Naive thymus-derived CD4-positive, alpha-beta T cell (primary cell): ENCODE measurements at regions of chr3 and their contacts with region 1.

Region 1: GRCh38 chr3:9731206-9732079 is at the start of gene BRPF1:
- DNase-seq: peak; percentile 91 to 99 (median 98)
- ATAC-seq: peak; percentile 96
- H3K4me3 ChIP-seq: peak within 1 kb of the TSS; percentile 85
- H3K4me3 Mint-ChIP-seq: peak within 1 kb of the TSS; percentile 91 to 98 (median 93)
- H3K27ac ChIP-seq: peak within 1 kb of the TSS; percentile 88
- H3K27ac Mint-ChIP-seq: peak within 1 kb of the TSS; percentile 86 to 97 (median 95)
- H3K4me1 ChIP-seq: peaks cover 22 to 32% of the 10 kb centered on the region in 2 donors
- H3K4me1 Mint-ChIP-seq: peaks cover 49 to 77% (median 72%) of the 10 kb centered on the region in 7 donors
- H3K27me3 ChIP-seq: no peaks in the 10 kb centered on the region
- H3K27me3 Mint-ChIP-seq: no peaks in the 10 kb centered on the region
- total RNA-seq, gene BRPF1: 32.0 to 42.4 (median 39.5) TPM

Region 2: DNA sequence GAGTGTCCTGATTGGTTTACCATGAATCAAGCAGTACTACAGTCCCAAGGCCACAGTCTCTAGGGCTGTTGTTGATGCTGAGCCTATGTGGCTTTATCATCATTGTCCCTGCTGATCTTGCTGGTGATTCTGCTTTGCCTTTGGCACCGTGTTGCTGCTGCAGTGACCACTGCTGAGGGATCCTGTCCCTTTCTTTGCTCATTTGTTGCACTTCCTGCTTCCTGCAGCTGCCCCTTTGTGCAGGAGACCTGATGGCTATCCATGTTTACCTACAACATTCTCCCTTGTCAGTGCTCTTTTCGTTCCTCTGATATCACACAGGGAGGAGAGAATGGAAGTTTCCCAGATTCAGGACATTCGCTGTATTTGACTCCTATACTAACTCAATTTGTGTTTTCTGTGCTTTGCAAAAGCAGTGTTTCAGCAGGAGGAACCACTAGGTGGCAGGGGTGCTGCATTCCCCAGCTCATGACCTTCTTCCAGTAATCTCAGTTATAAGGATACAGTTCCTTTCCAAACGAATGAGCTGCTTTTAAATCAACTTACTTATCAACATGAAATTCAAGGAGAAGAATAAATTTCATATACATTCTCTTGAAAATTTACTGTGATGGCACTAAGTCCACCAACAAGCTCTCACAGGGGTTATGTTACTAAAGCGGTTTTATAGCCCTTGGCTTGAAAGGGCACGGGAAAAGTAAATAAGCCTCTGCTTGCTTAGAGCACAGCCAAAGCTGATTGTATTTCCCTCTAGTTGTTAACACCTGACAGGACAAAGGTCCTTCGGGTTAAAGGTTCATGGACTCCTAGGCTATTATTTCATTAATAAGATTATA is 378.3 kb before region 1 on chr3:
- CTCF ChIA-PET with region 1: interaction called, 3 read pairs
- POLR2A ChIA-PET with region 1: no interaction called
- intact Hi-C with region 1: loop called (anchors 1 kb)
- DNase-seq: peak; percentile 21 to 57 (median 51)
- ATAC-seq: peak; percentile 85
- H3K4me3 ChIP-seq: no peak overlapping the region
- H3K4me3 Mint-ChIP-seq: no peak overlapping the region
- H3K27ac ChIP-seq: no peak overlapping the region
- H3K27ac Mint-ChIP-seq: peak overlapping the region in 2 of 9 donors; percentile 13 to 17
- H3K4me1 ChIP-seq: no peaks in the 10 kb centered on the region
- H3K4me1 Mint-ChIP-seq: peaks cover 4 to 13% (median 5%) of the 10 kb centered on the region in 7 donors
- H3K27me3 ChIP-seq: no peaks in the 10 kb centered on the region
- H3K27me3 Mint-ChIP-seq: peaks cover 0 to under 1% (median 0%) of the 10 kb centered on the region in 5 donors

Region 3: DNA sequence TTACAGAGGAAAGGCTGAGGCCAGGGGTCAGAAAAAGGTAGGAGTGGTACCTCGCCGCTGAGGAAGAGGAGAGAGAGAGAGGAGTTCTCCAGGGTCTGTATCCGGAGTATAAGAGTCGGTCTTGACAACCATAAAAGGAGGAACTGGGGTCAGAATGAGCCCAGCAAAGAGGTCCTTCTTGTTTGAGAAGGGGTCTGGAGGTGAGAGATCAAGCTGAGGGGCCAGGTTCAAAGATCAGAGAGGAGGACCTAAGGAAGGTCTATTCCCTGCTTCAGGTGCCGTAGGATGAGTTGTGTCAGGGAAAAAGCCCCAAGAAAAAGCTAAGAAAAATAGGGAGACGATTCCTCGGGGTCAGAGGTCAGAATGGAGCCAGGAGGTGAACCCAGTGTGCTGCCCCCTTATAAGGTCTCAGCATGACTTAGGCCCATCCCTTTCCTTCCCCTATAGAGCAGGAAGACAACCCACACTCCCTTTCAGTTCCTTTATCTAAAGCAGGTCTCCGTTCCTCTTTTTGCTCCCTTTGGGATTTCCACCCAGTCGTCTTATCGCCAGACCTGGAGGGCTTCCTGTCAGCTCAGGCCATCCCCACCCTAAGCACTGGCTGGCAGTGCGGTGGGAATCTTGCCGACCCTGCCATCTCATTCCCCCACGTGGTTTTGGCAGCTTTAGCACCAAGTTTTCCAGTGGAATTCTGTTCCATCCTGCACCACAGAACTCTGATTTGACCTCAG is 81.5 kb before region 1 on chr3:
- CTCF ChIA-PET with region 1: interaction called, 4 read pairs
- POLR2A ChIA-PET with region 1: interaction called, 15 read pairs
- intact Hi-C with region 1: loop called (anchors 1 kb)
- DNase-seq: peak in 2 of 9 donors; percentile 4 to 5
- ATAC-seq: peak; percentile 15
- H3K4me3 ChIP-seq: peak overlapping the region; percentile 97
- H3K4me3 Mint-ChIP-seq: peak overlapping the region; percentile 86 to 98 (median 95)
- H3K27ac ChIP-seq: peak overlapping the region; percentile 85
- H3K27ac Mint-ChIP-seq: peak overlapping the region; percentile 91 to 98 (median 97)
- H3K4me1 ChIP-seq: peaks cover 15 to 19% of the 10 kb centered on the region in 2 donors
- H3K4me1 Mint-ChIP-seq: peaks cover 19 to 51% (median 37%) of the 10 kb centered on the region in 7 donors
- H3K27me3 ChIP-seq: no peaks in the 10 kb centered on the region
- H3K27me3 Mint-ChIP-seq: peaks cover 0 to 3% (median 0%) of the 10 kb centered on the region in 5 donors

Region 4: DNA sequence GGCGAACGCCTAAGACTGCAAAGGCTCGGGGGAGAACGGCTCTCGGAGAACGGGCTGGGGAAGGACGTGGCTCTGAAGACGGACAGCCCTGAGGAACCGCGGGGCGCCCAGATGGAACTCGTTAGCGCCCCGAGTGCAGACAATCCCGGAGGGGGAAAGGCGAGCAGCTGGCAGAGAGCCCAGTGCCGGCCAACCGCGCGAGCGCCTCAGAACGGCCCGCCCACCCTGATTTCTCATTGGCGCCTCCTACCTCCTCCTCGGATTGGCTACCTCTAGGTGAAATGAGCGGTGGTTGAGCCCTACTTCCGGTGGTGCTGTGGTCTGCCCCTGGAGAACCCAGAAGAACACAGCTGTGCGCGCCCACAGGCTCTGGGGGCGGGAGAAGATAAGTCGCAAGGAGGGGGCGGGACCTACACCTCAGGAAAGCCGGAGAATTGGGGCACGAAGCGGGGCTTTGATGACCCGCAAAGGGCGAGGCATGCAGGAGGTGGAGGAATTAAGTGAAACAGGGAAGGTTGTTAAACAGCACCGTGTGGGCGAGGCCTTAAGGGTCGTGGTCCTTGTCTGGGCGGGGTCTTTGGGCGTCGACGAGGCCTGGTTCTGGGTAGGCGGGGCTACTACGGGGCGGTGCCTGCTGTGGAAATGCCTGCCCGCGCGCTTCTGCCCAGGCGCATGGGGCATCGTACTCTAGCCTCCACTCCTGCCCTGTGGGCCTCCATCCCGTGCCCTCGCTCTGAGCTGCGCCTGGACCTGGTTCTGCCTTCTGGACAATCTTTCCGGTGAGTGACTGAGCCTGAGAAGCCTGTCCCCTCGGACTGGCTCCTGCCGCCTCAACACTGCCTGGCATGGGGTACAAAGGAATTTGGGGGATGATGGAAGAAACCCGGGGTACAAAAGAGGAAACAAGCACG is 18.5 kb after region 1 on chr3 and contains the start of gene OGG1:
- CTCF ChIA-PET with region 1: interaction called, 7 read pairs
- POLR2A ChIA-PET with region 1: interaction called, 33 read pairs
- intact Hi-C with region 1: loop called (anchors 1 kb)
- DNase-seq: peak; percentile 77 to 95 (median 94)
- ATAC-seq: peak; percentile 97
- H3K4me3 ChIP-seq: peak within 1 kb of the TSS; percentile 84
- H3K4me3 Mint-ChIP-seq: peak within 1 kb of the TSS; percentile 93 to 98 (median 96)
- H3K27ac ChIP-seq: peak within 1 kb of the TSS; percentile 73
- H3K27ac Mint-ChIP-seq: peak within 1 kb of the TSS; percentile 86 to 96 (median 93)
- H3K4me1 ChIP-seq: peaks cover 13 to 22% of the 10 kb centered on the region in 2 donors
- H3K4me1 Mint-ChIP-seq: peaks cover 30 to 58% (median 47%) of the 10 kb centered on the region in 7 donors
- H3K27me3 ChIP-seq: no peaks in the 10 kb centered on the region
- H3K27me3 Mint-ChIP-seq: no peaks in the 10 kb centered on the region
- total RNA-seq, gene OGG1: 18.8 to 42.9 (median 31.6) TPM

Region 5: DNA sequence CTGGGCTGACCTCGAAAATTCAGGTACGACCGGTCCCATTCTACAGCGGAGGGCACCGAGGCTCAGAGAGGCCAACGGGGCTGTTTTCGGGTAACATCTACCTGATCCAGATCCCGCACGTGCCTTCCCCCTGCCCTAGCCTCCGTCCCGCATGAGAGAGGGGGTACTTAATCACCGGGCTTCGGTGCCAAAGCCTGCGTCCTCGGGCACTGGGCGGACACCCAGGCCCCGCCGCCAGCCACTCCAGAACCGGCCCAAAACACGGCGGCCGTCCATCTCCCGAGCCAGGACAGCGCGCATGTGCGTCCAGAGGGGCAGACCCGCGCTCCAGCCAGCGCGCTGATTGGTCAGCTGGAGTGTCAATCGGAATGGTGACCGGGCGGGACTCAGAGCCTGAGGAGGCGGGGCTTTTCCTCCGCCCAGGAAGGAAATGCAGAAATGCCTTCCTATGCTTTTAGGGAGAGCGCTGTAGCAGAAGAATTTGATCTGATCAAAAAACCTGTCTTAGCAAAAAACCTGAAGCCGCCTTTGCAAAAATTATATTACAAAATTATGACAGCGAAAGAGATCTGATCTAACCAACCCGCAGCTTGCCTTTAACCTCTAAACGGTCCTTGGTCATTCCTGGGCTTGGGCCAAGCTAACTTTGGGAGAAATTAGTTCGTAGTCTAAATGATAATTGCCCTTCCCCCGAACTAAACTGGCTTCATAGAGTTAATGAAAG is 112.4 kb after region 1 on chr3 and contains the start of gene RPUSD3:
- CTCF ChIA-PET with region 1: no interaction called
- POLR2A ChIA-PET with region 1: interaction called, 5 read pairs
- intact Hi-C with region 1: loop called in 1 of 2 experiments (anchors 1 kb)
- DNase-seq: peak; percentile 90 to 99 (median 94)
- ATAC-seq: peak; percentile 100
- H3K4me3 ChIP-seq: peak within 1 kb of the TSS; percentile 83
- H3K4me3 Mint-ChIP-seq: peak within 1 kb of the TSS; percentile 93 to 100 (median 97)
- H3K27ac ChIP-seq: peak within 1 kb of the TSS; percentile 82
- H3K27ac Mint-ChIP-seq: peak within 1 kb of the TSS; percentile 68 to 94 (median 91)
- H3K4me1 ChIP-seq: peaks cover 4 to 5% of the 10 kb centered on the region in 2 donors
- H3K4me1 Mint-ChIP-seq: peaks cover 12 to 40% (median 23%) of the 10 kb centered on the region in 7 donors
- H3K27me3 ChIP-seq: no peaks in the 10 kb centered on the region
- H3K27me3 Mint-ChIP-seq: no peaks in the 10 kb centered on the region
- total RNA-seq, gene RPUSD3: 17.7 to 61.2 (median 58.0) TPM

Region 6: GRCh38 chr3:10026084-10026890 is 294.8 kb after region 1 on chr3 and contains the start of gene FANCD2:
- CTCF ChIA-PET with region 1: no interaction called
- POLR2A ChIA-PET with region 1: no interaction called
- intact Hi-C with region 1: loop called in 1 of 2 experiments (anchors 1 kb)
- DNase-seq: peak; percentile 88 to 99 (median 94)
- ATAC-seq: peak; percentile 95
- H3K4me3 ChIP-seq: peak within 1 kb of the TSS; percentile 96
- H3K4me3 Mint-ChIP-seq: peak within 1 kb of the TSS; percentile 93 to 99 (median 96)
- H3K27ac ChIP-seq: peak within 1 kb of the TSS; percentile 89
- H3K27ac Mint-ChIP-seq: peak within 1 kb of the TSS; percentile 86 to 98 (median 97)
- H3K4me1 ChIP-seq: peaks cover 11 to 13% of the 10 kb centered on the region in 2 donors
- H3K4me1 Mint-ChIP-seq: peaks cover 0 to 45% (median 29%) of the 10 kb centered on the region in 7 donors
- H3K27me3 ChIP-seq: no peaks in the 10 kb centered on the region
- H3K27me3 Mint-ChIP-seq: no peaks in the 10 kb centered on the region
- total RNA-seq, gene FANCD2: 18.3 to 41.5 (median 34.1) TPM

Region 7: GRCh38 chr3:10322352-10322710 is 590.9 kb after region 1 on chr3:
- CTCF ChIA-PET with region 1: no interaction called
- POLR2A ChIA-PET with region 1: no interaction called
- intact Hi-C with region 1: loop called (anchors 1 kb)
- DNase-seq: peak in 3 of 9 donors; percentile 12 to 32 (median 17)
- ATAC-seq: no peak
- H3K4me3 ChIP-seq: no peak overlapping the region
- H3K4me3 Mint-ChIP-seq: peak overlapping the region in 5 of 10 donors; percentile 5 to 85 (median 32)
- H3K27ac ChIP-seq: no peak overlapping the region
- H3K27ac Mint-ChIP-seq: peak overlapping the region in 8 of 9 donors; percentile 0 to 97 (median 86)
- H3K4me1 ChIP-seq: peaks cover 12 to 22% of the 10 kb centered on the region in 2 donors
- H3K4me1 Mint-ChIP-seq: peaks cover 5 to 40% (median 30%) of the 10 kb centered on the region in 7 donors
- H3K27me3 ChIP-seq: no peaks in the 10 kb centered on the region
- H3K27me3 Mint-ChIP-seq: peaks cover 0 to 27% (median 9%) of the 10 kb centered on the region in 5 donors